ENCODE measurements at regions of chr19 and their contacts with region 1.

Region 1: DNA sequence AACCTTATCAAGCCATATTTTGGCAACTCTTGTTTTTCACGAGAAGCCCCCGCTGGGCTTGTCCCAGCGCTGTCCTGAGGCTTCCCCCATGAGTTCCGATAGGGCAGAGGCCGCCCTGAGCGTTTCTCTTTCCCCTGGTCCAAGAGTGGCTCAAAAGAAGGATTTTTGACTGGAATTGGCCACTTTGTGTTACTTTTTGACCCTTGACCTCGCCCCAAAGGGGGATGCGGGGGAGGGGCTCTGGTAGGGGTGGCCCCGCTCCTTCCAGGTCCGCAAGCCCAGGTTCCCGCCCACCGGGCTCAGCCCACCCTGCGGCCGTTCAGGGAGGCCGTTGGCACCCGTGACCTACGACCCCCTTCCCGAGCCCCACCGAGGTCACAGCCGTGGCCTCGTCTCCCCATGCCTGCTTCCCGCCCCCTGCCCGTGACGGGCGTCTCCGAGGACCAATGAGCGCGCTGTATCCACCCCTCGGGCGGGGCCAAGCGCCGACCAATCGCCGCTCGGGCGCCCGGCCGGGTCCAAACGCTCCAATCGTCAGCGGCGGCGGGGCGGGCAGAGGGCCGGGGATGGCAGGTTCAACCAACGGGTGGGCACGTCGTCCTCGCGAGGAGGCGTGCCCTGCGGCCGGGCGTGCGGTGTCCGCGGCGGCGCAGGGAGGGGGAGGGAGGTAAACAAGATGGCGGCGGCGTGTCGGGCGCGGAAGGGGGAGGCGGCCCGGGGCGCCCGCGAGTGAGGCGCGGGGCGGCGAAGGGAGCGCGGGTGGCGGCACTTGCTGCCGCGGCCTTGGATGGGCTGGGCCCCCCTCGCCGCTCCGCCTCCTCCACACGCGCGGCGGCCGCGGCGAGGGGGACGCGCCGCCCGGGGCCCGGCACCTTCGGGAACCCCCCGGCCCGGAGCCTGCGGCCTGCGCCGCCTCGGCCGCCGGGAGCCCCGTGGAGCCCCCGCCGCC is at the start of gene STK11:
- DNase-seq: peak; percentile 98 to 100 (median 99)
- ATAC-seq: peak; percentile 93
- H3K4me3 ChIP-seq: peak within 1 kb of the TSS; percentile 78 to 79
- H3K4me3 Mint-ChIP-seq: peak within 1 kb of the TSS; percentile 92
- H3K27ac ChIP-seq: peak within 1 kb of the TSS; percentile 51 to 62
- H3K27ac Mint-ChIP-seq: peak within 1 kb of the TSS; percentile 85
- H3K4me1 ChIP-seq: peaks cover 50% of the 10 kb centered on the region
- H3K4me1 Mint-ChIP-seq: peaks cover 43% of the 10 kb centered on the region
- H3K27me3 ChIP-seq: no peaks in the 10 kb centered on the region
- H3K27me3 Mint-ChIP-seq: no peaks in the 10 kb centered on the region
- CTCF ChIP-seq: no peak
- total RNA-seq, gene STK11: 38.0 to 43.4 TPM

Region 2: DNA sequence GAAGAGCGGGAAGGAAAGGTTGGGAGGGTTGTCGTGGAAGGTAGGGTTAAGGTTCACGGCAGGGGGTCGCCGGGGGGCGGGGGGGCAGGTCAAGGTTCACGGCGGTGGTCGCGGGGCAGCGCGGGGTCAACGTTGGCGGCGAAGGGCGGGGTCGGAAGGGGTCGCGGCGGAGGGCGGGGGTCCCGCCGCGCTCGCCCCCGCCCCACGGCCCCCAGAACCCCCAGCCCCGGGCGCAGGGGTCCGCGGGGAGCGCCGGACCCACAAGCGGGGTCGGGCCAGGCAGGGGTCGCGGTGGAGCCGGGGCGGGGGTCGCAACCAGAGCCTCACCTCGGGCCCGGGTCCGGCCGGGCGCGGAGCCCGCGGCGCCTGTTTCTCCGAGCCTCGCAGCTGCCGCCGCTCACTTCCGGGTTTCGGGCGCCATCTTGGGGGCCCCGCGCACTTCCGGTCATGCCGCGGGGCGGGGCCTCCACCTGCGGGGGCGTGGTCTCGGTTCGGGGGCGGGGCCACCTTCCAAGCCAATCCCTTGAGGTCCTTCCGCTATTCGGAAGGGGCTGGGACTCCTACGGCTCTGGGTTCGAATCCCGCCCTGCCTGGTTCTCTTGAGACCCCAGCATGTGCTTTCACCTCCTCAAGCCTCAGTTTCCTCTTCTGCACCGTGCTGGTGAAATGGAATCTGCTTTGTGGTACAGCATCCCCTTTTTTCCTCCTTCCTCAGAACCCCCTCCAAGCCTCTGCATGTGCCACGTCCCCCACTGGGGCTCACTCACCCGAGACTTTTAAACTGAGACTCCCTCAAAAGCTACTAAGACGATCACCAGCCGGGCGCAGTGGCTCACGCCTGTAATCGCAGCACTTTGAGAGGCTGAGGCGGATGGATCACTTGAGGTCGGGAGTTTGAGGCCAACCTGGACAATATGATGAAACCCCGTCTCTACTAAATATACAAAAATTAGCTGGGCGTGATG is 31.3 kb before region 1 on chr19 and contains the start of gene SBNO2:
- CTCF ChIA-PET with region 1: no interaction called
- POLR2A ChIA-PET with region 1: no interaction called
- intact Hi-C with region 1: loop called in 1 of 2 experiments (anchors 1 kb)
- DNase-seq: peak; percentile 82 to 95 (median 89)
- ATAC-seq: peak; percentile 92
- H3K4me3 ChIP-seq: peak within 1 kb of the TSS; percentile 64 to 77
- H3K4me3 Mint-ChIP-seq: peak within 1 kb of the TSS; percentile 89
- H3K27ac ChIP-seq: peak within 1 kb of the TSS; percentile 70 to 73
- H3K27ac Mint-ChIP-seq: peak within 1 kb of the TSS; percentile 94
- H3K4me1 ChIP-seq: peaks cover 23% of the 10 kb centered on the region
- H3K4me1 Mint-ChIP-seq: peaks cover 26% of the 10 kb centered on the region
- H3K27me3 ChIP-seq: no peaks in the 10 kb centered on the region
- H3K27me3 Mint-ChIP-seq: no peaks in the 10 kb centered on the region
- CTCF ChIP-seq: no peak
- total RNA-seq, gene SBNO2: 123 to 134 TPM

Region 3: GRCh38 chr19:1189419-1189818 is 16.0 kb before region 1 on chr19:
- CTCF ChIA-PET with region 1: interaction called, 11 read pairs
- POLR2A ChIA-PET with region 1: no interaction called
- intact Hi-C with region 1: no loop called
- DNase-seq: peak in 8 of 9 experiments; percentile 31 to 75 (median 59)
- ATAC-seq: peak; percentile 65
- H3K4me3 ChIP-seq: no peak overlapping the region
- H3K4me3 Mint-ChIP-seq: no peak overlapping the region
- H3K27ac ChIP-seq: peak overlapping the region in 1 of 2 experiments; percentile 28
- H3K27ac Mint-ChIP-seq: peak overlapping the region; percentile 32
- H3K4me1 ChIP-seq: peaks cover 22% of the 10 kb centered on the region
- H3K4me1 Mint-ChIP-seq: peaks cover 20% of the 10 kb centered on the region
- H3K27me3 ChIP-seq: no peaks in the 10 kb centered on the region
- H3K27me3 Mint-ChIP-seq: no peaks in the 10 kb centered on the region
- CTCF ChIP-seq: no peak

Region 4: GRCh38 chr19:1383311-1384084 is 178.1 kb after region 1 on chr19 and contains the start of gene NDUFS7:
- CTCF ChIA-PET with region 1: no interaction called
- POLR2A ChIA-PET with region 1: no interaction called
- intact Hi-C with region 1: no loop called
- DNase-seq: peak; percentile 91 to 100 (median 95)
- ATAC-seq: peak; percentile 90
- H3K4me3 ChIP-seq: peak within 1 kb of the TSS; percentile 93 to 94
- H3K4me3 Mint-ChIP-seq: peak within 1 kb of the TSS; percentile 94
- H3K27ac ChIP-seq: peak within 1 kb of the TSS; percentile 72 to 91
- H3K27ac Mint-ChIP-seq: peak within 1 kb of the TSS; percentile 99
- H3K4me1 ChIP-seq: peaks cover 10% of the 10 kb centered on the region
- H3K4me1 Mint-ChIP-seq: peaks cover 16% of the 10 kb centered on the region
- H3K27me3 ChIP-seq: no peaks in the 10 kb centered on the region
- H3K27me3 Mint-ChIP-seq: peaks cover 2% of the 10 kb centered on the region
- CTCF ChIP-seq: no peak
- total RNA-seq, gene NDUFS7: 38.6 to 41.1 TPM

Measured in CD8-positive, alpha-beta T cell (primary cell).